ENCODE measurements at regions of chr15 and their contacts with region 1.

Region 1: GRCh38 chr15:73717802-73718201 is 33.6 kb downstream of the CD276 start:
- DNase-seq: no peak
- H3K4me3 ChIP-seq: no peak overlapping the region
- H3K27ac ChIP-seq: no peak overlapping the region
- H3K4me1 ChIP-seq: peaks cover 5% of the 10 kb centered on the region
- H3K27me3 ChIP-seq: no peaks in the 10 kb centered on the region
- CTCF ChIP-seq: peak; percentile 46

Region 2: GRCh38 chr15:73683777-73684580 is 33.8 kb before region 1 on chr15 and contains the start of gene CD276:
- CTCF ChIA-PET with region 1: no interaction called
- POLR2A ChIA-PET with region 1: no interaction called
- intact Hi-C with region 1: no loop called
- DNase-seq: peak; percentile 60
- H3K4me3 ChIP-seq: peak within 1 kb of the TSS; percentile 97
- H3K27ac ChIP-seq: peak within 1 kb of the TSS; percentile 90
- H3K4me1 ChIP-seq: peaks cover 23% of the 10 kb centered on the region
- H3K27me3 ChIP-seq: no peaks in the 10 kb centered on the region
- CTCF ChIP-seq: no peak
- total RNA-seq, gene CD276: 71.4 and 74.6 TPM in 2 replicates

Region 3: GRCh38 chr15:73822998-73823397 is 105.2 kb after region 1 on chr15:
- CTCF ChIA-PET with region 1: no interaction called
- POLR2A ChIA-PET with region 1: interaction called, 12 read pairs
- intact Hi-C with region 1: no loop called
- DNase-seq: peak; percentile 21
- H3K4me3 ChIP-seq: no peak overlapping the region
- H3K27ac ChIP-seq: no peak overlapping the region
- H3K4me1 ChIP-seq: no peaks in the 10 kb centered on the region
- H3K27me3 ChIP-seq: peaks cover 11% of the 10 kb centered on the region
- CTCF ChIP-seq: no peak

Region 4: DNA sequence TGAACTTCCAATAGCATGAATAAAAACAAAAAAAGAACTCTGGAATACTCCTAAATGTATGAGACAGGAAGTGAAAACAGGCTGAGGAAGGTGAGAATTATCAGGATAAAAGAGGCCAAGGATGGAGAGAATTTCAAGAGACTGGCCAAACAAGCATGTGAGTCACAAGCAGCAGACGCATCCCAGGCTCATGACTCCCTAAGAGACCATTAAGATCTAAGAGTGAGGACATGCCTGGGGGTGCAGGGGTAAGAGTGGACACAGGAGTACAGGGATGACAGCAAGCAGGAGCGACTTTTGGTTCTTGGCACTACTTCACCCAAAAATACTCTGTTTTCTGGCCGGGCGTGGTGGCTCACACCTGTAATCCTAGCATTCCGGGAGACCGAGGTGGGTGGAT is 1148.3 kb after region 1 on chr15:
- CTCF ChIA-PET with region 1: no interaction called
- POLR2A ChIA-PET with region 1: no interaction called
- intact Hi-C with region 1: no loop called
- DNase-seq: peak; percentile 77
- H3K4me3 ChIP-seq: no peak overlapping the region
- H3K27ac ChIP-seq: peak overlapping the region; percentile 66
- H3K4me1 ChIP-seq: peaks cover 27% of the 10 kb centered on the region
- H3K27me3 ChIP-seq: no peaks in the 10 kb centered on the region
- CTCF ChIP-seq: no peak

Measured in A673 (cell line).